ENCODE measurements at regions of chr15 and their contacts with region 1.

Region 1: DNA sequence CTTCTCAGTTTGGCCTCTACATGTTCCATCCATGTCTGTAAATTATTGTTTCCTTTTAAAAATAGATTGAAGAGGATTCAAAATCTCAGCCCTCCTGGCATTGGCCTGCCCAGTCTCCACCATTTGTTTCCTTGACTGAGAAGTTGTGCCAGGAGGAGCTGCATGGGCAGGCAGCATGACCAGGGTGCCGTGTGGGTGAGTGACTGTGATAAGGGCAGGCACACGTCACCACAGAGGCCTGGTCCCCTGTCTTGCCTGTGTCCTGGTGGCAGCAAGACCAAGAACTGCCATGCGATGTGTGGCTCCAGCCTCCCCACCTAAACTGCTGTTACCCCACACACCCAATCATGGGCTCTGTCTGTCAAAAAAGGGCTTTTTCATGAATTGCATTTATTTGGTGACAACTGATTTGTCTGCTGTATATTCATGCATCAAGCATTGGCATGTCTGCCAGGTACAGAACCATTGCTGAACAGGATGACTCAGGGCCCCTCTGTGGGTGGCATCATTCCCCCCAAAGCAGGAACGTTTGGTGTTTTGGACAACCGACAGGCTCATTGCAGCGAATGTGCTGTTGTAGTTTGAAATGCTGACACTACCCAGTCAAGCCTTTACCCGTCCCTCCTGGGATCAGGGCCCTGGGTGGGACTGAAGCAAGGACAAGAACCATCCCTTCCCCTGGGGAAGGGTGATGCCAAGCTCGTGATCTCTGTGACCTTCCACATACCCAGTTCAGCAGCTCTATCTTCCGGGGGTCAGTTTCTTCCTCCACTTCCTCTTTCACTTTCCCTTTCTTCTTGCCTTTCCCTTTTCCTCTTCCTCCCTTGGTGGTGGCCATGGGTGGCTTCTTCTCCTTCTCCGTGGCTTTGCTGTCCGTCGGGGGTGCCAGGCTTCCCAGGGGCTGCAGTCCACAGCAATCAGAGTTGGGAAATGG is 51.6 kb downstream of the TRPM1 start:
- DNase-seq: no peak
- ATAC-seq: peak; percentile 69
- H3K4me3 Mint-ChIP-seq: peak overlapping the region; percentile 73
- H3K27ac Mint-ChIP-seq: peak overlapping the region; percentile 89
- H3K4me1 Mint-ChIP-seq: peaks cover 69% of the 10 kb centered on the region
- H3K27me3 Mint-ChIP-seq: no peaks in the 10 kb centered on the region
- CTCF ChIP-seq: no peak

Region 2: GRCh38 chr15:31013538-31014228 is 36.3 kb before region 1 on chr15:
- CTCF ChIA-PET with region 1: no interaction called
- POLR2A ChIA-PET with region 1: interaction called, 10 read pairs
- intact Hi-C with region 1: loop called (anchors 5 kb)
- DNase-seq: no peak
- ATAC-seq: peak; percentile 97
- H3K4me3 Mint-ChIP-seq: peak overlapping the region; percentile 50
- H3K27ac Mint-ChIP-seq: peak overlapping the region; percentile 86
- H3K4me1 Mint-ChIP-seq: peaks cover 48% of the 10 kb centered on the region
- H3K27me3 Mint-ChIP-seq: no peaks in the 10 kb centered on the region
- CTCF ChIP-seq: no peak

Region 3: DNA sequence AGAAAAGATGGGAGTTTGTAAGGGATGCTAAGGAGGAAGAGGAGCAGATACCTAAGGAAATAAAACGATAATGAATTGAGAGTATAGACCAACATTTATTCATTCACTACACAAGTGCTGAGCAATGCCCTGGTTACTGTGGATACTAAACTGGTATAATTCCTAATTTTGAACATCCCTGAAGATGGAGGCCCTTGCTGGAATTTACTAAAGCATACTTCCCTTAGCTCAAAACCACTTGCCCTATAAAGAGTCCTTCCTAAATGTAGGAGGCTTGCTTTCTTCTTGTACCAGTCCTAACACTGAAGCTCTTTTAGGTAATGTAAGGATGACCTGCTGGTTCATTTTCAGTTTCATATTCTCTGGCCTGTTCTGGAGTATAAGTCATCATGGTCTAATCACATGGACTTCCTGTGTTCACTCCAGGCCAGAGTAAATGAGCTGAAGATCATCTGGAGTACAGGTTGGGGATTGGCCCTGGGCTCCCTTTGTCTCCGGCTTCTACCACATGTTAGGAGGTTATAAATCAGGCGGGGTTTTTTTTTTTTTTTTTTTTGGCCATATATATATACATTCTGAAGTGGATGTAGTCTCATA is 18.4 kb before region 1 on chr15:
- CTCF ChIA-PET with region 1: interaction called, 4 read pairs
- POLR2A ChIA-PET with region 1: no interaction called
- intact Hi-C with region 1: loop called (anchors 2 kb)
- DNase-seq: no peak
- ATAC-seq: peak; percentile 50
- H3K4me3 Mint-ChIP-seq: no peak overlapping the region
- H3K27ac Mint-ChIP-seq: peak overlapping the region; percentile 62
- H3K4me1 Mint-ChIP-seq: peaks cover 53% of the 10 kb centered on the region
- H3K27me3 Mint-ChIP-seq: peaks cover 2% of the 10 kb centered on the region
- CTCF ChIP-seq: no peak

Region 4: GRCh38 chr15:31062936-31063335 is 13.0 kb after region 1 on chr15:
- CTCF ChIA-PET with region 1: no interaction called
- POLR2A ChIA-PET with region 1: no interaction called
- intact Hi-C with region 1: no loop called
- DNase-seq: no peak
- ATAC-seq: no peak
- H3K4me3 Mint-ChIP-seq: no peak overlapping the region
- H3K27ac Mint-ChIP-seq: no peak overlapping the region
- H3K4me1 Mint-ChIP-seq: peaks cover 11% of the 10 kb centered on the region
- H3K27me3 Mint-ChIP-seq: no peaks in the 10 kb centered on the region
- CTCF ChIP-seq: no peak

Region 5: DNA sequence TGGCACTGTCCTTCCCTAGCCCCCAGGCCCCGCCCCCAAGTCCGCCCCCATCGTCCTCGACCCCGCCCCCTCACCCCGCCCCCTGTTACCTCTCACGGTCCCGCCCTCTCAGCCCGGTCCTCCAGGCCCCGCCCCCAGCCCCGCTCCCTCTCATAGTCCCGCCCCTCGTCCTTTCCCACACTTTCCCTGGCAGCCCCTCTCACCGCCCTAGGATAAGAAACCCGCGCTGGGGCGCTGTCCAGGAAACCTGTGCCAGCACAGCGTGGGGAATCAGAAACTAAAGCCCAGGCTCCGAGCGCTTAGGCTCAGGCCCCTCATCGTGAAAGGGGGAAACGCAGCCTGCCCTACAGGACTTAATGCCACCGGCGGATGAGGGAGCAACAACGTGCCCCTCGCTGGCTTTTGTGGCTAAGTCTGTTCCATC is 30.7 kb after region 1 on chr15:
- CTCF ChIA-PET with region 1: no interaction called
- POLR2A ChIA-PET with region 1: no interaction called
- intact Hi-C with region 1: loop called (anchors 5 kb)
- DNase-seq: peak; percentile 42
- ATAC-seq: peak; percentile 90
- H3K4me3 Mint-ChIP-seq: peak overlapping the region; percentile 83
- H3K27ac Mint-ChIP-seq: no peak overlapping the region
- H3K4me1 Mint-ChIP-seq: peaks cover 49% of the 10 kb centered on the region
- H3K27me3 Mint-ChIP-seq: no peaks in the 10 kb centered on the region
- CTCF ChIP-seq: no peak

Region 6: DNA sequence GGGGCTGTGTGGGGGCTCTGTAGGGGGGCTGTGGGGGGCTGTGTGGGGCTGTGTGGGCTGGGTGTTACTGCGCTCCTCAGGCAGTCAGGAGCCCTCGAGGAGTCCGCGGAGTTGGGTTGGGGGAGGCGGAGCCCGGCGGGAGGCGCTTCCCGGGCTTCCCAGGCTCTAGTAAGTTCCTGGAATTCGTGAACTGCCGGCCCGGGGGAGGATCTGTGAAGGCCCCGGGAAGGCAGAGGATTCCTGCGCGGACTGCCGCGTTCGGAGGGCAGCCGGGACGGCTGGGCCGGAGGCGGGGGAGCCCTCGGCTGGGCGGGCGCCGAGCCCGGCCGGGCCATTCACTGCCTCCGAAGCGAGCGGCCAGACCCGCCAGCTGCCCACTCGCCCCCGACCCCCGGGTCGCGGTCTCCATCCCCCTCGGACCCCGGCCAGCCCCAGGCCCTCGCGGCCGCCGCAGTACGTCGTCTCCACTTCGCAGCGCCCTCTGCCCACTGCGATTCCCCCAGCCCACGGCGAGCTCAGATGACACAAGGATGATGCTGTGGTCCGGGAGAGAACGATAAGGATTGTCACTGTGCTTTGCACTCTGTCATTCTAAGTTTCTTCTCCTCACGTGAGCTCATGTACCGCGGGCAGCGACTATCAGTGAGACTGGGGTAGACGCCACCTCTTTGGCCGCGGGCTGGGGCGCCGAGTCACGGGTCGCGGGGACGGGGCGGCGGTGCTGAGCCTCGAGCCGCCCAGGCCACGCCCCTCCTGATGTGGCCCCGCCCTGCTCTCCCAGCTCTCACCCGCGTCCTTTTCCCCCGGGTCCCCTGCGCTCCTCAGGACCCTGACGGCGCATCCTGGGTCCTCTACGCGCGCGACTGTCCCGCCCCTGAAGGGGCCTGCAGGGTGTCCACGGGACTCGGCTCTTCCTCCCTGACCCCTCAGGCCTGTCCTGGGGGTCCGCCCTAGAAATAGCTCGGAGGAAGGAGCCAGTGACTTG is 342.0 kb after region 1 on chr15:
- CTCF ChIA-PET with region 1: no interaction called
- POLR2A ChIA-PET with region 1: no interaction called
- intact Hi-C with region 1: no loop called
- DNase-seq: peak; percentile 78
- ATAC-seq: peak; percentile 91
- H3K4me3 Mint-ChIP-seq: peak overlapping the region; percentile 87
- H3K27ac Mint-ChIP-seq: peak overlapping the region; percentile 35
- H3K4me1 Mint-ChIP-seq: peaks cover 13% of the 10 kb centered on the region
- H3K27me3 Mint-ChIP-seq: no peaks in the 10 kb centered on the region
- CTCF ChIP-seq: no peak

Measured in activated B cell treated with CpG ODN at 0.5 μM for 24 hours (primary cell).